Esophagus muscularis mucosa (tissue), 4 donors: ENCODE measurements at regions of chr17 and their contacts with region 1.

Region 1: GRCh38 chr17:57987580-57988421 is at the start of gene VEZF1:
- DNase-seq: peak; percentile 95
- H3K4me3 ChIP-seq: peak within 1 kb of the TSS; percentile 77 to 92 (median 83)
- H3K27ac ChIP-seq: peak within 1 kb of the TSS; percentile 97 to 98 (median 98)
- H3K4me1 ChIP-seq: peaks cover 41 to 58% (median 53%) of the 10 kb centered on the region in 4 donors
- H3K27me3 ChIP-seq: no peaks in the 10 kb centered on the region
- CTCF ChIP-seq: no peak
- EP300 ChIP-seq: no peak
- POLR2A ChIP-seq: peak; percentile 31
- total RNA-seq, gene VEZF1: 98.9 to 154 (median 121) TPM

Region 2: DNA sequence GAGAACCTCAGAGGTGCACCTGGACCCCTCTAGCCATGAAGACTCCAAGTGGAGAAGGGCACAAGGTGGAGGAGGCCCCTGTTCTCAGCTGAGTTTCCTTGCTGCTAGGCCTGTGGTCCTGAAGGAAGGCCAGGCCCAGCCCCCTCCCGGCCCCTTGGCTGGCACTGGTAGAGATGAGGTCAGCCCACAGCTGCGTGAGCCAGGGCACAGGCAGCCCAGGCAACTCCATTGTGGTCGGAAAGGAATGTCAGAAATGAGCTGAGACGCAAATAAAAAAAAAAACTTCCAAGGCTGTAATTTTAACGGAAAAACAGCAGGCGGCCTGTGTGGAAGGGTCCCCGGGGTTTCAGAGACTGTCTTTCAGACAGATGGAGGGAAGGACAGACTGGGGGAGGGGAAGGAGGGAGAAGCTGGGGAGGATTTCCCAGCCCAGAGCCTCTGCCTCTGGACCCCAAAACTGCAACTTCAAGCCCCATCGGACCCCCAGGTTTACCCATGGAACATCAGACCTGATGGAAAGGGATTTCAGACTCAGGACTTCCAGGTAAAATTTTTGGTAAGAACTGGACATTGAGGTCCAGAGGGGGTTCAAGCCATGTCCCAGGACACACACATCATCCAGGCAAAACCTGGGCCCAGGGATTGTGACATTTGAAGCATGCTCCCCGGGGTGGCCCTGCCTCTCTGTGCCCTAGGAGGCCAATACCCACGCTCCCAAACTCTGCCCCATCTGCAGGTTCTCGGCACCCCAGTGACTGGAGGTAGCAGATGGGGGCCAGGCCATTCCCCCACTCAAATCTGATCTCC is 112.3 kb before region 1 on chr17:
- intact Hi-C with region 1: loop called (anchors 5 kb)
- DNase-seq: no peak
- H3K4me3 ChIP-seq: peak overlapping the region in 3 of 4 donors; percentile 28 to 44 (median 29)
- H3K27ac ChIP-seq: peak overlapping the region; percentile 88 to 95 (median 93)
- H3K4me1 ChIP-seq: peaks cover 81 to 100% (median 94%) of the 10 kb centered on the region in 4 donors
- H3K27me3 ChIP-seq: no peaks in the 10 kb centered on the region
- CTCF ChIP-seq: peak; percentile 34 to 75 (median 37)
- EP300 ChIP-seq: peak; percentile 48
- POLR2A ChIP-seq: no peak

Region 3: DNA sequence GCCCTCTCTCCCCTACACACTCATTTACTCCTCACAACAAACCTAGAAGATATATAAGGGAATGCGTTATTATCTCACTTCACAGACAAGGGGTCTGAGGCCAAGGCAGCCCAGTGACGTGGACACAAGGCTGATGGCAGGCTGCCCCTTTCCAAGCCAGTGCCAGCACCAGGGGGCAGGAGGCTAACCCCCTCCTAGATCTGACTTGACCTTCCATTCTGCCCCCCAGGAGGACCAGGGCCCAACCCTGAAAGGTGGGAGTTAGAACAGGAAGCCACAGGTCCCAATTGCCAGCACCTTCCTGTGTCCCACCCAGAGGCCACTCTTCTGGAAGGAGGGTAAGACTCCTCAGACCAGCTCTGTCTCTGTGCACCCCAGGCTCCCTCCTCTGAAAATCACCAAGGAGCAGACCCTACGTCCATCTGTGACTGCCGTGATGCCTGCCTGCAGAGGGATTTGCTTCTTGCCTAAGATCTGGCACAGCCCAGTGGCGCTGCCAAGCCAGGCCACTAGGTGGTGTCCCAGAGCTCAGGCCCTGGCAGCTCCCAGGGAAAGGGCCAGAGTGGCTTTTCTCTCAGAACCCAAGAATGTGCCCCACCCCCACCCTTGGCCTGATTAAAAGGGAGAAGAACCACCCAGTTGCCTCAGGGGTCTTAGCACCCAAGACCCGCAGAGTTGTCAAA is 95.5 kb before region 1 on chr17:
- intact Hi-C with region 1: loop called (anchors 5 kb)
- DNase-seq: peak; percentile 98
- H3K4me3 ChIP-seq: peak overlapping the region in 2 of 4 donors; percentile 30 to 35
- H3K27ac ChIP-seq: peak overlapping the region; percentile 88 to 100 (median 96)
- H3K4me1 ChIP-seq: peaks cover 85 to 100% (median 96%) of the 10 kb centered on the region in 4 donors
- H3K27me3 ChIP-seq: no peaks in the 10 kb centered on the region
- CTCF ChIP-seq: peak; percentile 93 to 100 (median 96)
- EP300 ChIP-seq: no peak
- POLR2A ChIP-seq: no peak

Region 4: DNA sequence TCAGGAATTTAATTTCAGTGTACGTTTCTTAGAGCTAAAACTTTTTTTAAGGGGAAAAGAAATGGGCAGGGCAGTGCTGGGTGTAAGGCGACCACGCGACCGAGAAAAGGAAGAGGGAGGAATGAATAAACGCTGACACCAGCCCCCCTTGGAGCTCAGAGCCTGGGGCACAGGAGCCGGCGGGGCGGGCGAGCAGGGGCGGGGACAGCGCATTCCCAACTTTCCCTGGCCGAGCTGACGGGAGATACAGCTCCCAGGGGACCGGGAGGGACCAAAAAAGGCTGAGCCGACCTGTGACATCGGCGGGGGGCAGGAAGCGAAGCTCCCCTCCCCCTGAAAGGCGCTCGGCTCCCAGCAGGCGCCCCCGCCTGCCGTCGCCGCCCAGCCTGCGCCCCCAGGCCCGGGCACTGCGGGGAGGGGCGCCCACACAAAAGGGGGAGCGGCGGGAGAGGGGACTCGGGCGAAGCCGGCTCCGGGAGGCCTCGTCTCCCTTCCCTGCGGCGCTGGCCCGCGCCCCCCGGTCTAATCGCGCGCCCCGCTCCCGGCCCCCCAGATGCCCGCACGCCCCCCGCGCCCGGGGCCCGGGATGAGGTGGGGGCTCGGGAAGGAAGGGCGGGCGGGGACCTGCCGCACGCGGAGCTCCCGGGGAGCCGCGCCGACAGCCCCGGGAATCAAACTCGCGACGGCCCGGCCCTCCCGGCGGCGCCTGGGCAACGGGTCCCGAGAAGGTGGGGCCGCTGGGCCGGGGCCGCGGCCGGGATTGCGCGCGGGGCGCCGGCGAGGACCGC is 33.2 kb before region 1 on chr17:
- intact Hi-C with region 1: loop called (anchors 5 kb)
- DNase-seq: peak; percentile 45
- H3K4me3 ChIP-seq: peak overlapping the region; percentile 84 to 98 (median 94)
- H3K27ac ChIP-seq: peak overlapping the region; percentile 98 to 100 (median 100)
- H3K4me1 ChIP-seq: peaks cover 56 to 69% (median 61%) of the 10 kb centered on the region in 4 donors
- H3K27me3 ChIP-seq: no peaks in the 10 kb centered on the region
- CTCF ChIP-seq: no peak
- EP300 ChIP-seq: no peak
- POLR2A ChIP-seq: peak; percentile 50

Region 5: DNA sequence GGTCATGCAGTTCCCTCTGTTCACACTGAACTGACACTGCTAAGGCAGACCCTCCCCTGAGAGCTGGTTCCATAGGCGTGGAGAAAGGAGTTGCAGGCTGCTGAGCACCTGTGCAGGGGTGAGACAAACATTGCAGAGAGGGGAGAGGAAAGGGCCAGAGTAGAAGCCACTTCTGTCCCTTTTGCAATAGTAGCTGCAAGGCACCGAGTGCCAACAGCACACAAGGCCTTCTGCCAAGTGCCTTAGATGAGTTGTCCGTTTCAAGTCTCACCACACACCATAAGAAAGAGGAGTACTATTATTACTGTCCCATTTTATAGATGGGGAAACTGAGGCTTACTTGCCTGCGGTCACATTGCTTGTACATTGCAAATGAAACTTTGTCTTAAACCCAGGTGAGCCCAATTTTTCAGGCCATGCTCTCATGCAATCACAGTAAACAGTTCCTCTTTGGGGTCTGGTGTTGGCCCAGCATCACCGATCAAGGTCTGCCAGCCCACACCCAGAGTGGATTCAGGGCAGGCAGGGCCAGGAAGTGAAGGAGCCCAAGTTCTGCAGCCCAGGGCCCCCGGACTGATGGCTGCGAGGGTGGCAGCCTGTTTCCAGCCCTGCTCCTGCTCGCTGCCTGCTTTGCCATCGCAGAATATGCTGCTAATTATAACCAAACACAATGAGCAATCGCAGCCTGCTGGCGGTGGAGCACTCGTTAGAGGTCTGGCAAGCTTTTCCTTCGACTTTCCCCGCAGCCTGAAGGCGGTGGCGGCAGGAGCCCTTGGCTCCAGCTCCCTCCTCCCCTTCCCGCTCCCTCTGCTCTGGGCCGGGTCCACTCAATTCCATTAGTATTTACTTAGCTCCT is 58.7 kb after region 1 on chr17:
- intact Hi-C with region 1: no loop called
- DNase-seq: no peak
- H3K4me3 ChIP-seq: no peak overlapping the region
- H3K27ac ChIP-seq: no peak overlapping the region
- H3K4me1 ChIP-seq: no peaks in the 10 kb centered on the region
- H3K27me3 ChIP-seq: peaks cover 0 to 11% (median 0%) of the 10 kb centered on the region in 4 donors
- CTCF ChIP-seq: no peak
- EP300 ChIP-seq: no peak
- POLR2A ChIP-seq: no peak